ENCODE measurements at regions of chr5 and their contacts with region 1.

Region 1: GRCh38 chr5:42908509-42909488 is 97.1 kb upstream of the SELENOP start:
- H3K4me3 Mint-ChIP-seq: peak overlapping the region; percentile 77
- H3K27ac Mint-ChIP-seq: peak overlapping the region; percentile 62
- H3K4me1 Mint-ChIP-seq: peaks cover 9% of the 10 kb centered on the region
- H3K27me3 Mint-ChIP-seq: peaks cover 3% of the 10 kb centered on the region

Region 2: DNA sequence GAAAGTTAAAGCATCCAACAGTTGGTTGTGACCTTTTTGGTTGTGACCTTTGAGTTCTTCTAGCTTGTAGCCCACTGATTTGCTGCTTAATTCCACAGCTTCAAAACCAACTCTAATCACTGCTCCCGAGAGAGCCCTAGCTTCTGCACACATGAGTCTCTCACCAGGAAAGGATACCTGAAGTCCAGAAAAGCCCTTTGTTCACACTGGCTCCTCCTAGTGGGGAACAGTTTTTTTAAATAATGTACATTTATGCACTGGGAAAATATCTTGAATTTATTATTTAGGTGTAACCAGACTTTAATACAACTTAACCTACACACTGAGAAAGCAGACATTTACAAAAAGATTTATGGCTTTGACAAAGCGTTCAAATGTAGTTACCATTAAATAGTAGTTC is 272.4 kb before region 1 on chr5:
- intact Hi-C with region 1: no loop called
- H3K4me3 Mint-ChIP-seq: no peak overlapping the region
- H3K27ac Mint-ChIP-seq: no peak overlapping the region
- H3K4me1 Mint-ChIP-seq: no peaks in the 10 kb centered on the region
- H3K27me3 Mint-ChIP-seq: no peaks in the 10 kb centered on the region

Region 3: DNA sequence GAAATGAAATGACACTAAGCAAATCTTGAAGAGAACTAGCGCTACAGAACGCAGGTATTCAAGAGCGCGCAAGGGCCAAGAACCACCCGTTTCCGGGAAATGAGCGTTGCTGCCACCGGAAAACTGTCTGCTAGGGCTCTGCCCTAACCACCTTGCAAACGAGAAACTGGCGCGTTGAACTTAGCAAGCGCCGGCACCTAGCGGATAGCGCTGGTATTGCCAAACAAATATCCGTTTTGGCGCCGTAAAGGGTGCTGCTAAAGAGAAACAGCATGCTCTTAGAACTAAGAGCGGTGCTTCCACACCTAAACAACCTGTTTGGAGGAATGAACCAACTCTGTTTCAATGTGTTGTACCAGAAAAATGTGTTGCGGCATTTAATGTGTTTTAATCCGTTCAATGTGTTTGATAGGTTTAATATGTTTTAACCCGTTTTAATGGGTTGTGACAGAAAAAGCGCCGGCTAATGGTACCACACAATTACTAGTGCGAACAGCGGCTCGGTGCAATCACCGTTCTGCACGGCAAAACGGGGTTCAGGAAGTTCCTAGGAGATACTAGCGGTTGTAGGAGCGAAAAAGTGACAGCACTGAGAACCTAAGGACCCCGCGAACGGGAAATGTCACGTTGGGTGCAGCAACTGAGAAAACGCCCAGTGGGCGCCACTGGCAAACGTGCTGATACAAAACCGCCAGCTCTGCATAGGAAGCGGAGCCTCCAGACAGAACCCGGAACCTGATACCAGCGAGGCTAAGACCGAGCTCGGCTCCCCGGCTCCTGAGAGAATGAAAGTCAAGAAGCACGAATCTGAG is 131.7 kb after region 1 on chr5 and contains the start of gene ANXA2R:
- intact Hi-C with region 1: loop called (anchors 2 kb)
- H3K4me3 Mint-ChIP-seq: peak within 1 kb of the TSS; percentile 88
- H3K27ac Mint-ChIP-seq: peak within 1 kb of the TSS; percentile 100
- H3K4me1 Mint-ChIP-seq: peaks cover 43% of the 10 kb centered on the region
- H3K27me3 Mint-ChIP-seq: no peaks in the 10 kb centered on the region

Region 4: GRCh38 chr5:43305948-43306565 is 397.3 kb after region 1 on chr5:
- intact Hi-C with region 1: loop called (anchors 5 kb)
- H3K4me3 Mint-ChIP-seq: no peak overlapping the region
- H3K27ac Mint-ChIP-seq: no peak overlapping the region
- H3K4me1 Mint-ChIP-seq: peaks cover 52% of the 10 kb centered on the region
- H3K27me3 Mint-ChIP-seq: no peaks in the 10 kb centered on the region

Region 5: DNA sequence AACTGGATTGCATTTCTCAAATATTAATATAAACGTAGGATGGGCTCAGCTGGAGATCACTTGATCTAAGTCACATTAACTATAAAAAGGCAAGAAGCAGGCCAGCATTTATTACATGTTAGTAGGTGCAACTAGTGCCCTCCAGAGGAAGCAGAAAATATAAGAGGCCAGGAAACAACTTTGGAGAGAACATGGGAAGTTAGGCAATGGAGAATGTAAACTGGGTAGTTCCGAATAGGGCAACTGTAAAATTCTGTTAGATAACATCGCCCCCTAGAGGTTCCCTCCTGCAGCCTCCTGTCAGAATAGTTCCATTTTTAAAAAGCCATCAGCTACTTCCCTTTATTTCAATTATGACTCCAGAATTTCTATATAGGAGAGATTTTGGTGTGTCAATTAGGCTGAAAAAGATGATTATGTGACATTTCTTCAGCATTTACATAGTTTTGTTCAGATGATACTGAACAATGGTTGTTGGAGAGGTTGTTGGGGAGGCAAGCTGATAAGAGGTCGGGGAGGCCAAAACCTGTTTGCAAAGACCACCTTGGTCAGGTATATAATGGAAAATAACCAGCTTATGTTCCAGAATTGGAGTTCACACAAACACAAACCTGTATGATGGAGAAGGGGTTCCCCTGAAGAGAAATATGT is 481.0 kb after region 1 on chr5:
- intact Hi-C with region 1: loop called (anchors 10 kb)
- H3K4me3 Mint-ChIP-seq: no peak overlapping the region
- H3K27ac Mint-ChIP-seq: peak overlapping the region; percentile 4
- H3K4me1 Mint-ChIP-seq: peaks cover 18% of the 10 kb centered on the region
- H3K27me3 Mint-ChIP-seq: no peaks in the 10 kb centered on the region